T-cell (primary cell): ENCODE measurements at regions of chr1 and their contacts with region 1.

Region 1: DNA sequence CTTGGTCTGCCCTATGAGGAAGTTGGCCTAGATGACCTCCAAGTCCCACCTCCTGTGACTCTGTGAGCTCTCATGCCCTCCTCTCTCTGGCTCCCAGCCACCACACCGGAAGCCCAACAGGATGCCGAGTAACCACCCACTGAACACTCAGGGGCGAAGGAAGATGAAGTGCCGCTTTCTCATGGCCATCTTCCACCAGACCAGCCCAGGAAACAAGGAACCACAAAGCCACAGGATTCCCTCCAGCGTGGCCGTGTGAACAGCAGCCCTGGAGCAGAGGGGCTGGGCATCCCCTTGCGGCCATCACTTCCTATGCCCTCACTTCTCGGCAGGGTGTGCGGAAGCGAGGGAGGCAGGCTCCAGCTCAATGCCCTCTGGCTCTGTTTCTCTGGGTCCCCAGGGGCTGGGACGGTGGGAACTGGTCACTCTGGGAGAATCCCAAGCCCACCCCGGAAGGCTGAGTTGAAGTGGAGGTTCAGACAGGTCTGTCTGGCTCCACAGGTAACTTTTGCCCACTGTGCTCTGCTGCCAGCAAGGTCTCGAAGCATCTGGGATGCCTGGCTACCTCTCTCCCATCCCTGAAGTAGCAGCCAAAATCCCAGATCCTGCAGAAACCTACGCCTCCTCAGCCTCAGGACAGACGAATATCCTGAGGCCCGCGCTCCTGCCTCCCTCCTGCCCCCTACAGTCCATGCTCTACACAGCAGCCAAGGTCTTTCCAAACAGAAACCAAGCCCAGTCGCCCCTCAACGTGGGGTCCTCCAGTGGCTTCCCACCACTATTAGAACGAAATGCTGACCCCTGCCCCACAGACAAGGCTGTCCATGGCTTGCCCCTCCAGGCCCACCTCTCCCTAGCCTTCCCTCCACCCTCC is 44.2 kb upstream of the ECE1 start:
- DNase-seq: peak; percentile 61 to 89 (median 81)
- ATAC-seq: peak; percentile 86 to 94 (median 91)
- H3K4me3 ChIP-seq: peak overlapping the region; percentile 43 to 63
- H3K4me3 Mint-ChIP-seq: peak overlapping the region; percentile 80 to 91 (median 81)
- H3K27ac ChIP-seq: peak overlapping the region; percentile 94
- H3K27ac Mint-ChIP-seq: peak overlapping the region; percentile 98 to 99
- H3K4me1 ChIP-seq: peaks cover 63 to 89% of the 10 kb centered on the region in 2 experiments
- H3K4me1 Mint-ChIP-seq: peaks cover 87 to 90% (median 88%) of the 10 kb centered on the region in 3 donors
- H3K27me3 ChIP-seq: no peaks in the 10 kb centered on the region
- H3K27me3 Mint-ChIP-seq: no peaks in the 10 kb centered on the region

Region 2: GRCh38 chr1:20400341-20401177 is 933.9 kb before region 1 on chr1:
- CTCF ChIA-PET with region 1: no interaction called
- POLR2A ChIA-PET with region 1: no interaction called
- DNase-seq: no peak
- ATAC-seq: no peak
- H3K4me3 ChIP-seq: no peak overlapping the region
- H3K4me3 Mint-ChIP-seq: no peak overlapping the region
- H3K27ac ChIP-seq: no peak overlapping the region
- H3K27ac Mint-ChIP-seq: no peak overlapping the region
- H3K4me1 ChIP-seq: no peaks in the 10 kb centered on the region
- H3K4me1 Mint-ChIP-seq: no peaks in the 10 kb centered on the region
- H3K27me3 ChIP-seq: peaks cover 2 to 69% of the 10 kb centered on the region in 2 experiments
- H3K27me3 Mint-ChIP-seq: peaks cover 52 to 74% of the 10 kb centered on the region in 2 donors

Region 3: GRCh38 chr1:21294266-21294989 is 40.0 kb before region 1 on chr1:
- CTCF ChIA-PET with region 1: interaction called in 1 of 2 experiments, 37 read pairs
- POLR2A ChIA-PET with region 1: interaction called, 4 to 5 read pairs
- DNase-seq: peak; percentile 69 to 95 (median 88)
- ATAC-seq: peak; percentile 79 to 83 (median 80)
- H3K4me3 ChIP-seq: peak overlapping the region; percentile 48 to 76
- H3K4me3 Mint-ChIP-seq: peak overlapping the region; percentile 80 to 90 (median 88)
- H3K27ac ChIP-seq: peak overlapping the region; percentile 100
- H3K27ac Mint-ChIP-seq: peak overlapping the region; percentile 98 to 99
- H3K4me1 ChIP-seq: peaks cover 45 to 94% of the 10 kb centered on the region in 2 experiments
- H3K4me1 Mint-ChIP-seq: peaks cover 83 to 90% (median 86%) of the 10 kb centered on the region in 3 donors
- H3K27me3 ChIP-seq: no peaks in the 10 kb centered on the region
- H3K27me3 Mint-ChIP-seq: no peaks in the 10 kb centered on the region

Region 4: DNA sequence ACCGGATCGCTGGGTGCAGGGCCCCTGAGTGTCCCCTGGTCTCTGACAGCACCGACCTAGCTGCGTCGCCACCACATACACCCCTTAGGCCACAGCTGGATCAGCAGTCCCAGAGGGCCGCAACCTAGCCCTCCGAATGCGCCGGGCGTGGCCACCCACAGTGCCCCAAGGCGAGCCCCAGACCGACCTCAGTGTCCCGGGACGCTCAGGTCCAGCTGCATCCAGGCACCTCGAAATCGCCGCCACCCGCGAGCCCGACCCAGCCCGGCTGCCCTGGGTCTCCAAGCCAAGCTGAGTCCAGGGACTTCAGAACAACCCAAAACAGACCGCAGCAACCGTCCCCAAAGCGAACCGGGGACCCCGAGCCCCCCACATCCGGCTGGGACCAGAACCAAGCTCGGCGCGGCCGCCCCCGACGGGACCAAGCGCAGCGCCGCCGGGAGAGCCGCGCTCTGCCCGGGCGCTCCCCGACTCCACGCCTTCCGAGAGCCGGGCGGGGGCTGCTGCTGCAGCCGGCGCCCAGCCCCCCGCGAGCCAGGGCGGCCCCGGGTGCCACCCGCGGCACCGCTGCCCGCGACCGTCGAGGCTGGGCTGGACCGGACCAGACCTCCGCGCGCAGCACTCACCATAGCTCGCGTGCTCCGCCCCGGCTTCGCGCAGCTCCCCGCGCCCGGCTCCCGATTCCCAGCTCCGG is 10.4 kb after region 1 on chr1:
- CTCF ChIA-PET with region 1: interaction called in 1 of 2 experiments, 12 read pairs
- POLR2A ChIA-PET with region 1: interaction called, 3 read pairs
- DNase-seq: peak in 1 of 35 experiments; percentile 29
- ATAC-seq: peak; percentile 33 to 42 (median 40)
- H3K4me3 ChIP-seq: peak overlapping the region; percentile 79 to 86
- H3K4me3 Mint-ChIP-seq: peak overlapping the region in 2 of 3 donors; percentile 86 to 87
- H3K27ac ChIP-seq: peak overlapping the region; percentile 34
- H3K27ac Mint-ChIP-seq: peak overlapping the region; percentile 82 to 89
- H3K4me1 ChIP-seq: peaks cover 28 to 59% of the 10 kb centered on the region in 2 experiments
- H3K4me1 Mint-ChIP-seq: peaks cover 40 to 45% (median 45%) of the 10 kb centered on the region in 3 donors
- H3K27me3 ChIP-seq: peaks cover 0 to 9% of the 10 kb centered on the region in 2 experiments
- H3K27me3 Mint-ChIP-seq: no peaks in the 10 kb centered on the region